ENCODE measurements at regions of chr12 and their contacts with region 1.

Region 1: GRCh38 chr12:55642669-55643068 is 6.0 kb downstream of the OR10P1 start:
- DNase-seq: no peak
- H3K4me3 ChIP-seq: no peak overlapping the region
- H3K27ac ChIP-seq: no peak overlapping the region
- H3K4me1 ChIP-seq: peaks cover 0 to 3% of the 10 kb centered on the region in 2 experiments; a peak in 1 of 4 replicates
- H3K27me3 ChIP-seq: peaks cover 37% of the 10 kb centered on the region
- CTCF ChIP-seq: no peak
- EP300 ChIP-seq: no peak
- RAD21 ChIP-seq: no peak

Region 2: DNA sequence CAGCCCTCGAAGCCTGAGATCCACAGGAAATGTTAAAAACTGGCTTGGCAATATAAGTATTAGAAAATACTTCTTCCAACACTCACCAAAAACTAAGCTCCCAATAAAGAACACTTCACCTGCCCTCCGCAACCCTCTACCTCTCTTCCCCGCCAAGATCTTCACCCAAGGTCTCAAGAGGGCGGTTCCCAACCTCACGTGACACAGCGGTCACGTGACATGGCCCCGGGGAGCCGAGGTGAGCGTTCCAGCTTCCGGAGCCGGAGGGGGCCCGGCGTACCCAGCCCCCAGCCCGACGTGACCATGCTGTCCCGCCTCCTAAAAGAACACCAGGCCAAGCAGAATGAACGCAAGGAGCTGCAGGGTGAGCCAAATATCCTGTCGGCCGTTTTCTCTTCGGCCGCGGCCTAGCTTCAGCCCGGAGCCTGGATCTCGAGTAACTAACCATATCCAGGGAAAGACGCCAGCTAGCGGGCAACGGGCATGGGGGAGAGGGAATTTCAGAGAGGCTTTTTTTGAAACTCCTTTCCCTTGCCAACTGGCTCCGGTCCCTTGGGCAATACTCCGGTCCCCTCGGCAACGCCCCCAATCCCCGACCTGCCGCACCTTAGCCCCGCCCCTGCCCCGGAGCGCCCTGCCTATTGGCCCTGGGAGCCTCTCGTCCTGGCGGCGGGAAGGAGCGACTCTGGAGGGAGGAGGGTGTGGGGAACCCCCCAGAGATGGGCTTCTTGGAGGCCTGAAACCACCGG is 73.3 kb after region 1 on chr12 and contains the start of gene BLOC1S1:
- CTCF ChIA-PET with region 1: interaction called, 17 read pairs
- POLR2A ChIA-PET with region 1: no interaction called
- DNase-seq: peak; percentile 96
- H3K4me3 ChIP-seq: peak within 1 kb of the TSS; percentile 67 to 92
- H3K27ac ChIP-seq: peak within 1 kb of the TSS; percentile 87 to 92
- H3K4me1 ChIP-seq: peaks cover 29% of the 10 kb centered on the region in 2 experiments
- H3K27me3 ChIP-seq: no peaks in the 10 kb centered on the region
- CTCF ChIP-seq: 0 out of 2 replicates have a peak, but pooled peaks have one; percentile 9
- EP300 ChIP-seq: peak in 1 of 2 experiments; percentile 56; a peak in 1 of 4 replicates
- RAD21 ChIP-seq: no peak
- polyA plus RNA-seq, gene BLOC1S1: 277 and 331 TPM in 2 replicates

Region 3: DNA sequence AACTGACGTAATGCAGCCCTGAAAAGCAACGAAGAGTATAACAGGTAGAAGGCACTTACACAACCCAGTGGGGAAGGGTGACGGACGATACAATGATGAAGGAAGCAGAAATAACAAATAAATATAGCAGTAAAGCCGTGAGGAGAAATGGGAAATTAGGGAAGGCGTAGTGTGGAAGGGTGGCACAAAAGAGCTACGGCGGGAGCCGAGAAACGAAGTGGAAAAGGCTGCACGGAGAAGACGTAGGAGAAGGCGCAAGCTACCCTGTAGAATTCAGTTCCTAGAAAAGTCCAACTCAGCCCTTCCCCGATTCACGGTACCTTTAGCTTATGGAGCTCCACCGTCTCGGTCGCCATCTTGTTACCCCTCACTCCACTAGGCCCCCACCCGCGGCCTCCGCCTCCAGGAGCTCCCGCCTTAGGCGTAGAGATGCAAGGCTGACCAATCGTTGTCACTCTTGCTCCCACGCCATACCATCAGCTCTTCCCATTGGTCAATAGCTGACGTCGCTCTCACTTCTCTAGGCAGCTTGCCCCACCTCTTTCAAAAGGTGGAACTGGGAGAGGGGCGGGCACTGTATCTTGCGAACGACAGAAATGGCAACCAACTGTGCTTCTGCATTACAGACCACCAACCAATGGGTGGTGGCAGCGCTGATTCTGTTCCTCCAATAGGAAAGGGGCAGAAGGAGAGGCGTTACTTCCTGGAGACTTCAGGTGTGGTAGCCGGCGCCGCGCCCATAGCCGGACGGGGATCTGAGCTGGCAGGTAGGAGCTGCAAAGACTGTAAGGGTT is 174.9 kb after region 1 on chr12 and contains the starts of genes ORMDL2 and SARNP:
- CTCF ChIA-PET with region 1: no interaction called
- POLR2A ChIA-PET with region 1: no interaction called
- DNase-seq: peak; percentile 91
- H3K4me3 ChIP-seq: peak within 1 kb of the TSS; percentile 87 to 96
- H3K27ac ChIP-seq: peak within 1 kb of the TSS; percentile 76 to 85
- H3K4me1 ChIP-seq: peaks cover 8 to 11% of the 10 kb centered on the region in 2 experiments
- H3K27me3 ChIP-seq: no peaks in the 10 kb centered on the region
- CTCF ChIP-seq: no peak
- EP300 ChIP-seq: no peak
- RAD21 ChIP-seq: no peak
- polyA plus RNA-seq, gene ORMDL2: 35.2 and 37.3 TPM in 2 replicates
- polyA plus RNA-seq, gene SARNP: 65.8 and 66.9 TPM in 2 replicates